Tibial artery (tissue), 4 donors: ENCODE measurements at regions of chr2 and their contacts with region 1.

Region 1: DNA sequence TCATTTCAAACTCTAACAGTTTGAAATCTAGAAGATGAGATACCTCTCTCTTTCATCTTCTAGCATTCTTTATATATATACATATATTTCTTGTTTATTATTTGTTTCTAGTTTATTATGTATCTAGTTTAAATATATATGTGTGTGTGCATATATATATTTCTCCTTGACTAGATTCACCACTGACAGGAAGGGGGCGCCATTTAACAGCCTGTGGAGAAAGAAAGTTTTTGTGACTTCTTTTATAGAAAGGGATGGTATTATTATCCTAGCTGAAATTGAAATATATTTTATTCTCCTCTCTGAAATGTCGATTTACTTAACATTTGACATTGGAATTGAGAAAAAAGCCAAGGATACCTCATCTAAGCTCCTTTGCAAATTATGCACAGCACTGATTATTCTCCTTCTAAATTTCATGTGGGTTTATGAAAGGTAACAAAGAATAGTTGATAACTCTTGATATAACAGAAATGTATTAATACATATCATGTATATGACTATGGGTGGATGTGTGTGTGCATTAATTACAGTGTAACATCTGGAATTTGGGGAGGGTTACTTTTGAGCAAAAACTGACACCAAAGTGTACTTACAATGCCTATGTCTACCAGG is 160.7 kb upstream of the NT5C1B start:
- DNase-seq: peak in 1 of 2 donors; percentile 62
- H3K4me3 ChIP-seq: no peak overlapping the region
- H3K27ac ChIP-seq: no peak overlapping the region
- H3K4me1 ChIP-seq: peaks cover 0 to 7% (median 2%) of the 10 kb centered on the region in 4 donors
- H3K27me3 ChIP-seq: no peaks in the 10 kb centered on the region
- CTCF ChIP-seq: peak; percentile 74 to 79

Region 2: DNA sequence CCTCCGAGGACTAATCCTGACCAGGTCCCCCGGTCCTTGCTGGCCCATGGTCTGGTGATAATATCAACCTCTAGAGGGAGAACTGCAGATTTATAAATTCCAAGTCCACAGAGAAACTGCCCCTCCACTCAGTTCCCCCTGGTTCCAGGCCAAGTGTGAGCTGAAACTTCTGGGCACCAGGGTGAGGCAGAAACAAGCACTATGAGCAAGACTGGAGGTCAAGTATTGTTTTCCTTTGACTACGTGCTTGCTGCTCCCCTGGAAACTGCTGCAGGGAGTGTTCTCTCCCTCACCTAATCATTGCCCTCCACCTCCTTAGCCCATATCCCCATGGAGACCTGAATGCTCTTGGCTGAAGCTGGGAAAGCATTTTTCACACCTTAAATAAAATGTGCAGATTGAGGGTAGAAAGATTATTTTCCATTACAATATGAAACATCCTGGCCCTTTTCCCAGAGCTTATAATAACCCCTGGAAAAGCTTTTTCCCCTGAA is 324.8 kb before region 1 on chr2:
- intact Hi-C with region 1: loop called (anchors 10 kb)
- DNase-seq: no peak
- H3K4me3 ChIP-seq: no peak overlapping the region
- H3K27ac ChIP-seq: peak overlapping the region in 1 of 2 donors; percentile 37
- H3K4me1 ChIP-seq: peaks cover 0 to 12% (median 3%) of the 10 kb centered on the region in 4 donors
- H3K27me3 ChIP-seq: no peaks in the 10 kb centered on the region
- CTCF ChIP-seq: no peak

Region 3: GRCh38 chr2:18804536-18804935 is 54.5 kb after region 1 on chr2:
- intact Hi-C with region 1: no loop called
- DNase-seq: no peak
- H3K4me3 ChIP-seq: no peak overlapping the region
- H3K27ac ChIP-seq: no peak overlapping the region
- H3K4me1 ChIP-seq: no peaks in the 10 kb centered on the region
- H3K27me3 ChIP-seq: no peaks in the 10 kb centered on the region
- CTCF ChIP-seq: no peak

Region 4: GRCh38 chr2:19362755-19363473 is 612.9 kb after region 1 on chr2:
- intact Hi-C with region 1: loop called (anchors 10 kb)
- DNase-seq: peak; percentile 76 to 91
- H3K4me3 ChIP-seq: peak overlapping the region; percentile 57 to 60
- H3K27ac ChIP-seq: peak overlapping the region; percentile 55 to 93
- H3K4me1 ChIP-seq: peaks cover 0 to 30% (median 14%) of the 10 kb centered on the region in 4 donors
- H3K27me3 ChIP-seq: no peaks in the 10 kb centered on the region
- CTCF ChIP-seq: peak; percentile 79 to 80

Region 5: DNA sequence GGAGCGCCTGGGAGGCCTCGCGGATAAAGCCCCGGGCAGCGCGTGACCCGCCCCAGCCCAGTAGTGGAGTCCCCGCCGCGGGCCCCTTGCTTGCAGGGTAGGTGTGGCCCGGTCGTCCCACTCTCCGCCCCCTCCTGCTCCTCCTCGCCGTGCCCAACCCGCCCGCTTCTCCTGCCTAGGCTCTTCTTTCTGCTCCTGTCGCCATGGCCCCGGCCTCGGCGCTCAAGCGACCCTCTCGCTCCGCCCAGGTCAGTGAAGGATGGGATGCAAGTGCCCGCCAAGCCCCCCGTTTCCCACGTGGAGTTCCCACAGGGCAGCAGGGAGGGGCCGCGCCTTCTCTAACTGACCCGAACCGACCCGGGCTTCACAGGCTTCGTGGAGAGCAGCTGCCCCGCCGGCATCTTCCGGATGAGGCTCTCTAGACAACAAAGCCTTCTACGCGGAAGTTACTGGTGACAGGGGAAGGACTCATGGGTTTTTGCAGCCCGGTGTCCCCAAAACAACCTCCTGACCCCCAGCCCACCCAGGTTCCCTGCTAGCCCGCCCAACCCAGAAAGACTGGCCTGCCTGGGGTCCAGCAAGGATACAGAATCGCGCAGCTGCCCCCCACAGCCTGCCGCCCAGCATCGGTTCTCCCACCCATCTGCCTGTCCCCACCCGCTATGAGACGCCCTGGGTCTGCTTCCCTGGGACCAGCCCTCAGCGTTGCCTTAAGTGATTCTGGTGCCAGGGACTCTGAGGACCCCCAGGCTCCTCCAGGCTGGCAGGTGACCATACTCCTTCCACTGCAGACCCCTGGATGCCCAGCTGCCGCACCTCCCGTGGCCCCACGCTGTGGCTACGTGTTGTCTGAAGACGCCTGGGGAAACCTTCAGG is 1118.9 kb after region 1 on chr2:
- intact Hi-C with region 1: loop called (anchors 5 kb)
- DNase-seq: peak; percentile 50 to 72
- H3K4me3 ChIP-seq: peak overlapping the region; percentile 47 to 60
- H3K27ac ChIP-seq: peak overlapping the region; percentile 15 to 31
- H3K4me1 ChIP-seq: peaks cover 0 to 14% (median 9%) of the 10 kb centered on the region in 4 donors
- H3K27me3 ChIP-seq: no peaks in the 10 kb centered on the region
- CTCF ChIP-seq: no peak